Activated CD4-positive, alpha-beta T cell treated with anti-CD3 and anti-CD28 coated beads for 36 hours (primary cell): ENCODE measurements at regions of chr11 and their contacts with region 1.

Region 1: GRCh38 chr11:64864473-64865285 is 13.7 kb downstream of the EHD1 start:
- DNase-seq: peak; percentile 81
- ATAC-seq: peak; percentile 46
- H3K4me3 Mint-ChIP-seq: peak overlapping the region; percentile 64
- H3K27ac Mint-ChIP-seq: peak overlapping the region; percentile 95
- H3K4me1 Mint-ChIP-seq: peaks cover 95% of the 10 kb centered on the region
- H3K27me3 Mint-ChIP-seq: no peaks in the 10 kb centered on the region

Region 2: GRCh38 chr11:64846998-64847666 is 17.5 kb before region 1 on chr11:
- CTCF ChIA-PET with region 1: interaction called, 89 read pairs
- POLR2A ChIA-PET with region 1: interaction called, 16 read pairs
- intact Hi-C with region 1: loop called in 1 of 2 experiments (anchors 2 kb)
- DNase-seq: peak; percentile 96
- ATAC-seq: peak; percentile 75
- H3K4me3 Mint-ChIP-seq: no peak overlapping the region
- H3K27ac Mint-ChIP-seq: no peak overlapping the region
- H3K4me1 Mint-ChIP-seq: peaks cover 54% of the 10 kb centered on the region
- H3K27me3 Mint-ChIP-seq: no peaks in the 10 kb centered on the region

Region 3: DNA sequence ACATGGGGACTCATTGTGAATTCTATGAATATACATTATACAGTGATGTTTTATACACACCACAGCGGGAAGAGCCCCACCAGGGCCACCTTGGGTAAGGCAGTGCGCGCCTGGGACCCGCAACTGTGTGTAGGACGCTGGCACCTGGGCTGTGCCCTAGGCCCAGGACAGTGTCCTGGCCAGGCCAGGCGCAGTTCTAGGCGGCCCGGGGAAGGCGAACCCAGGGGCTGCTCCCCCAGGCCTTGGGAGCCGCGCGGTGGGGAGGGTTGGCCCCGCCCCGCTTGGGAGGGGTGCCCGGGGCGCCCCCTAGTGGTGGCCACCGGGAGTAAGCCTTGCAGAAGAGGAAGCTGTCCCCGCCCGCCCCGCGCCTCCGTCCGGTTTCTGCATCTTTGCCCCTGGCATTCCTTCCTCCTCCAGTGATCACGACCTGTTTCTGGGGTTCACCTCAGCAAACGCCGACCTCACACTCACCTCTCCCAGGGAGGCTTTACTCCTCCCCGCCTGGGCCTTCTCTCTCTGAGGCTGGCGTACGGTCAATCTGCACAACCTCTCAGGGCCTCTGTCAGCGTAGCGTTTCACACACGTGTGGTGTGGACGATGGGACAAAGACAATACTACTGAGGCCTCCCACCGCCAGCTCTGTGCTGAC is 23.2 kb after region 1 on chr11:
- CTCF ChIA-PET with region 1: interaction called, 13 read pairs
- POLR2A ChIA-PET with region 1: interaction called, 9 read pairs
- intact Hi-C with region 1: no loop called
- DNase-seq: peak; percentile 92
- ATAC-seq: peak; percentile 83
- H3K4me3 Mint-ChIP-seq: peak overlapping the region; percentile 64
- H3K27ac Mint-ChIP-seq: peak overlapping the region; percentile 92
- H3K4me1 Mint-ChIP-seq: peaks cover 35% of the 10 kb centered on the region
- H3K27me3 Mint-ChIP-seq: no peaks in the 10 kb centered on the region

Region 4: DNA sequence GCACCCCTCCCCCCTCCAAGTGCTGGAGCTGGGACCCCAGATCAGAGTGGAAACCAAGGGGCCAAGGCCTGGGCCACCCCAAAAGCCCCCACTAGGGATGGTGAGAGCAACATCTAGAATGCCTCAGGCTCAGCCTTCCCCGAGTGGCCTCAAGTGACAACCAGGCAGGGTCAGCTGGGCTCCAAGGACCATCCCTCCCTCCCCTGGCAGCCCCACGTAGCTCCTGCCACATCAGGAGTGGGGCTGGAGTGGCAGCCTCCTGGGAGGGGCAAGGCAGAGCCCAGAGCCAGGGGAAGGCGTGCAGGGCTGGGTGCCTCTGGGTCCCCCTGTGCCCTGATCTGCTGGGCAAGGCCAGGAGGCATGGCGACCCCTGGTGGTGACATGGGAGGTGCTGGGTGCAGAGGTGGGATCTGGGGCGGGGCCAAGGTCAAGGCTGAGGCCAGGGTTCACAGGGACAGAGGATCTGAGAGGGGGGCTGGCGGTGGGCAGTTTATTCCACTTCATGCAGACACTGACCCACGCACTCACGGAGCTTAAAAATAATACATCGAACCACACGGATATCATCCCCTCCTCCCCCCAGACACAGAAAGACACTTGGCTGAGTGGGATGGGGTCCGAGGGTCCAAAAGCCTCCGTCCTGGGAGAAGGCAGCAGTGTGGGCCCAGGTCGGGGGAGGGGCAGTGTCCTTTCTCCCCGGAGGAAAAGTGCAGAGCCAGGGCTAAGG is 29.6 kb after region 1 on chr11:
- CTCF ChIA-PET with region 1: interaction called, 13 read pairs
- POLR2A ChIA-PET with region 1: no interaction called
- intact Hi-C with region 1: no loop called
- DNase-seq: peak; percentile 96
- ATAC-seq: peak; percentile 99
- H3K4me3 Mint-ChIP-seq: no peak overlapping the region
- H3K27ac Mint-ChIP-seq: no peak overlapping the region
- H3K4me1 Mint-ChIP-seq: no peaks in the 10 kb centered on the region
- H3K27me3 Mint-ChIP-seq: no peaks in the 10 kb centered on the region

Region 5: GRCh38 chr11:64971421-64972233 is 106.9 kb after region 1 on chr11 and contains the start of gene MAJIN:
- CTCF ChIA-PET with region 1: no interaction called
- POLR2A ChIA-PET with region 1: no interaction called
- intact Hi-C with region 1: loop called in 1 of 2 experiments (anchors 1 kb)
- DNase-seq: peak; percentile 96
- ATAC-seq: peak; percentile 48
- H3K4me3 Mint-ChIP-seq: peak within 1 kb of the TSS; percentile 63
- H3K27ac Mint-ChIP-seq: peak within 1 kb of the TSS; percentile 94
- H3K4me1 Mint-ChIP-seq: peaks cover 42% of the 10 kb centered on the region
- H3K27me3 Mint-ChIP-seq: no peaks in the 10 kb centered on the region
- total RNA-seq, gene MAJIN: 1.2 to 1.6 TPM

Region 6: GRCh38 chr11:65425105-65425970 is 560.7 kb after region 1 on chr11:
- CTCF ChIA-PET with region 1: no interaction called
- POLR2A ChIA-PET with region 1: interaction called, 4 read pairs
- intact Hi-C with region 1: loop called (anchors 5 kb)
- DNase-seq: peak; percentile 87
- ATAC-seq: peak; percentile 18
- H3K4me3 Mint-ChIP-seq: peak overlapping the region; percentile 100
- H3K27ac Mint-ChIP-seq: peak overlapping the region; percentile 99
- H3K4me1 Mint-ChIP-seq: peaks cover 51% of the 10 kb centered on the region
- H3K27me3 Mint-ChIP-seq: peaks cover 6% of the 10 kb centered on the region